ENCODE measurements at regions of chr3 and their contacts with region 1.

Region 1: GRCh38 chr3:170180908-170181879 is at the start of gene PHC3:
- DNase-seq: peak; percentile 96
- ATAC-seq: peak; percentile 79
- H3K4me3 Mint-ChIP-seq: peak within 1 kb of the TSS; percentile 97
- H3K27ac Mint-ChIP-seq: peak within 1 kb of the TSS; percentile 99
- H3K4me1 Mint-ChIP-seq: peaks cover 21% of the 10 kb centered on the region
- H3K27me3 Mint-ChIP-seq: no peaks in the 10 kb centered on the region
- total RNA-seq, gene PHC3: 47.6 to 83.9 TPM

Region 2: GRCh38 chr3:169812332-169813235 is 368.6 kb before region 1 on chr3 and contains the starts of genes LRRC34 and LRRIQ4:
- CTCF ChIA-PET with region 1: no interaction called
- POLR2A ChIA-PET with region 1: no interaction called
- intact Hi-C with region 1: loop called in 1 of 2 experiments (anchors 2 kb)
- DNase-seq: peak; percentile 90
- ATAC-seq: peak; percentile 77
- H3K4me3 Mint-ChIP-seq: peak within 1 kb of the TSS; percentile 77
- H3K27ac Mint-ChIP-seq: peak within 1 kb of the TSS; percentile 82
- H3K4me1 Mint-ChIP-seq: peaks cover 27% of the 10 kb centered on the region
- H3K27me3 Mint-ChIP-seq: peaks cover 2% of the 10 kb centered on the region
- total RNA-seq, gene LRRC34: 3.8 TPM
- total RNA-seq, gene LRRIQ4: 0.09 to 0.12 TPM

Region 3: GRCh38 chr3:170021083-170021482 is 160.1 kb before region 1 on chr3:
- CTCF ChIA-PET with region 1: no interaction called
- POLR2A ChIA-PET with region 1: no interaction called
- intact Hi-C with region 1: no loop called
- DNase-seq: no peak
- ATAC-seq: peak; percentile 71
- H3K4me3 Mint-ChIP-seq: no peak overlapping the region
- H3K27ac Mint-ChIP-seq: no peak overlapping the region
- H3K4me1 Mint-ChIP-seq: peaks cover 7% of the 10 kb centered on the region
- H3K27me3 Mint-ChIP-seq: no peaks in the 10 kb centered on the region

Region 4: GRCh38 chr3:170037463-170038433 is 143.4 kb before region 1 on chr3 and contains the start of gene GPR160:
- CTCF ChIA-PET with region 1: interaction called, 4 read pairs
- POLR2A ChIA-PET with region 1: no interaction called
- intact Hi-C with region 1: loop called in 1 of 2 experiments (anchors 2 kb)
- DNase-seq: peak; percentile 92
- ATAC-seq: peak; percentile 92
- H3K4me3 Mint-ChIP-seq: peak within 1 kb of the TSS; percentile 79
- H3K27ac Mint-ChIP-seq: no peak within 1 kb of the TSS
- H3K4me1 Mint-ChIP-seq: peaks cover 19% of the 10 kb centered on the region
- H3K27me3 Mint-ChIP-seq: no peaks in the 10 kb centered on the region
- total RNA-seq, gene GPR160: 9.4 to 11.1 TPM

Region 5: DNA sequence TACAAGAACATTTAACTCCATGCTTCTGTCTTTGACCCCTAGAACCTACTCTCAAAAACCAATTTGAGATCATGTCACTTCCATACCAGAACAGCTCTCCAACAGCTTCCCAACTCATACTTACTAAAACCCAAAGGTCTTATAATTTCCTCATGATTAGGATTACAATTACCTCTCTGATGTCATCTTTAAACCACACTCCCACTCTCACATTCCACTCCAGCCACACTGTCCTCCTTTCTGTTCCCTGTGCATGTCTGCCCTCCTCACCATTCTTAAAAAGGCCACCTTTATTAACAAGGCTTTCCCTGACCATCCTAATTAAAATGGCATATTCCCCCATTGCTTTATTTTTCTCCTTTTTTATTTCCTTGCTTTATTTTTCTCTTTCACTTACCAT is 18.6 kb before region 1 on chr3:
- CTCF ChIA-PET with region 1: interaction called, 5 read pairs
- POLR2A ChIA-PET with region 1: no interaction called
- intact Hi-C with region 1: loop called (anchors 1 to 2 kb)
- DNase-seq: no peak
- ATAC-seq: no peak
- H3K4me3 Mint-ChIP-seq: no peak overlapping the region
- H3K27ac Mint-ChIP-seq: peak overlapping the region; percentile 68
- H3K4me1 Mint-ChIP-seq: peaks cover 69% of the 10 kb centered on the region
- H3K27me3 Mint-ChIP-seq: no peaks in the 10 kb centered on the region

Region 6: DNA sequence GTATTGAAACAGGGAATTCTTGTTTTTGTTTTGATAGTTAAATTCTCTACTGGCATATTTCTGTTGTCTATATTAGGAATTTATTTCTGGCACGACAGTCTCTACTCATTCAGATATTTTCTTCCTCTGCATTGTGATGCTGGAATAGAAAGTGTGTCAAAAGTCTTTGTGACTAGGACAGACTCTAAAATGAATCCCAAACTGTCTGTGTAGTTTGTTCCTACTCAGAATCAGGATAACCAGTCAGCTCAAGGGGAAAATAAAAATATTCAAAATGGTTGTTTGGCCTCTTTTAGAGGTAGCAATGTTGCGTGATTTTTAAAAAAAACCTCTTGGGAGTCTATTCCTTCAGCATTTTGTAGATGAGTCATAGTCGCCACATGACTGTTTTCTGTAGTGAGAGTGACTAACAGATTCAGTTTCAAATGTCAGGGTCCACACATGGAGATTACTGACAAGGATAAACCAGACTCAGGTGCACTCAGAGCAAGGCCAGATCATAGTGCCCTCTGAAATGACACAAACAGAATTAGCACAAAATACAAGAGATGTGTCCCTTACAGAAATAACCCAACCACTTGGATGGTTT is 391.6 kb after region 1 on chr3:
- CTCF ChIA-PET with region 1: no interaction called
- POLR2A ChIA-PET with region 1: no interaction called
- intact Hi-C with region 1: loop called in 1 of 2 experiments (anchors 5 kb)
- DNase-seq: peak; percentile 32
- ATAC-seq: peak; percentile 97
- H3K4me3 Mint-ChIP-seq: no peak overlapping the region
- H3K27ac Mint-ChIP-seq: no peak overlapping the region
- H3K4me1 Mint-ChIP-seq: peaks cover 25% of the 10 kb centered on the region
- H3K27me3 Mint-ChIP-seq: peaks cover 34% of the 10 kb centered on the region

Region 7: GRCh38 chr3:170869645-170870593 is 688.7 kb after region 1 on chr3 and contains the start of gene RPL22L1:
- CTCF ChIA-PET with region 1: no interaction called
- POLR2A ChIA-PET with region 1: interaction called, 3 read pairs
- intact Hi-C with region 1: loop called in 1 of 2 experiments (anchors 1 kb)
- DNase-seq: peak; percentile 96
- ATAC-seq: peak; percentile 95
- H3K4me3 Mint-ChIP-seq: peak within 1 kb of the TSS; percentile 94
- H3K27ac Mint-ChIP-seq: peak within 1 kb of the TSS; percentile 99
- H3K4me1 Mint-ChIP-seq: peaks cover 15% of the 10 kb centered on the region
- H3K27me3 Mint-ChIP-seq: no peaks in the 10 kb centered on the region
- total RNA-seq, gene RPL22L1: 186 to 441 TPM

Measured in activated CD4-positive, alpha-beta T cell treated with anti-CD3 and anti-CD28 coated beads for 36 hours (primary cell).